T-cell (primary cell): ENCODE measurements at regions of chr1 and their contacts with region 1.

Region 1: GRCh38 chr1:21255278-21255942 is 34.9 kb downstream of the ECE1 start:
- DNase-seq: peak; percentile 51 to 90 (median 82)
- ATAC-seq: peak; percentile 73 to 81 (median 74)
- H3K4me3 ChIP-seq: no peak overlapping the region
- H3K4me3 Mint-ChIP-seq: no peak overlapping the region
- H3K27ac ChIP-seq: no peak overlapping the region
- H3K27ac Mint-ChIP-seq: peak overlapping the region in 1 of 2 donors; percentile 53
- H3K4me1 ChIP-seq: peaks cover 7 to 17% of the 10 kb centered on the region in 2 experiments
- H3K4me1 Mint-ChIP-seq: peaks cover 32 to 34% (median 33%) of the 10 kb centered on the region in 3 donors
- H3K27me3 ChIP-seq: no peaks in the 10 kb centered on the region
- H3K27me3 Mint-ChIP-seq: no peaks in the 10 kb centered on the region

Region 2: GRCh38 chr1:21270086-21270689 is 14.8 kb after region 1 on chr1:
- CTCF ChIA-PET with region 1: interaction called, 4 to 13 read pairs
- POLR2A ChIA-PET with region 1: no interaction called
- DNase-seq: peak; percentile 56 to 87 (median 78)
- ATAC-seq: peak; percentile 84 to 91 (median 89)
- H3K4me3 ChIP-seq: no peak overlapping the region
- H3K4me3 Mint-ChIP-seq: peak overlapping the region in 1 of 3 donors; percentile 19
- H3K27ac ChIP-seq: no peak overlapping the region
- H3K27ac Mint-ChIP-seq: peak overlapping the region; percentile 71 to 78
- H3K4me1 ChIP-seq: peaks cover 0 to 17% of the 10 kb centered on the region in 2 experiments
- H3K4me1 Mint-ChIP-seq: peaks cover 24 to 28% (median 28%) of the 10 kb centered on the region in 3 donors
- H3K27me3 ChIP-seq: no peaks in the 10 kb centered on the region
- H3K27me3 Mint-ChIP-seq: no peaks in the 10 kb centered on the region

Region 3: DNA sequence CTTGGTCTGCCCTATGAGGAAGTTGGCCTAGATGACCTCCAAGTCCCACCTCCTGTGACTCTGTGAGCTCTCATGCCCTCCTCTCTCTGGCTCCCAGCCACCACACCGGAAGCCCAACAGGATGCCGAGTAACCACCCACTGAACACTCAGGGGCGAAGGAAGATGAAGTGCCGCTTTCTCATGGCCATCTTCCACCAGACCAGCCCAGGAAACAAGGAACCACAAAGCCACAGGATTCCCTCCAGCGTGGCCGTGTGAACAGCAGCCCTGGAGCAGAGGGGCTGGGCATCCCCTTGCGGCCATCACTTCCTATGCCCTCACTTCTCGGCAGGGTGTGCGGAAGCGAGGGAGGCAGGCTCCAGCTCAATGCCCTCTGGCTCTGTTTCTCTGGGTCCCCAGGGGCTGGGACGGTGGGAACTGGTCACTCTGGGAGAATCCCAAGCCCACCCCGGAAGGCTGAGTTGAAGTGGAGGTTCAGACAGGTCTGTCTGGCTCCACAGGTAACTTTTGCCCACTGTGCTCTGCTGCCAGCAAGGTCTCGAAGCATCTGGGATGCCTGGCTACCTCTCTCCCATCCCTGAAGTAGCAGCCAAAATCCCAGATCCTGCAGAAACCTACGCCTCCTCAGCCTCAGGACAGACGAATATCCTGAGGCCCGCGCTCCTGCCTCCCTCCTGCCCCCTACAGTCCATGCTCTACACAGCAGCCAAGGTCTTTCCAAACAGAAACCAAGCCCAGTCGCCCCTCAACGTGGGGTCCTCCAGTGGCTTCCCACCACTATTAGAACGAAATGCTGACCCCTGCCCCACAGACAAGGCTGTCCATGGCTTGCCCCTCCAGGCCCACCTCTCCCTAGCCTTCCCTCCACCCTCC is 79.0 kb after region 1 on chr1:
- CTCF ChIA-PET with region 1: interaction called in 1 of 2 experiments, 11 read pairs
- POLR2A ChIA-PET with region 1: no interaction called
- DNase-seq: peak; percentile 61 to 89 (median 81)
- ATAC-seq: peak; percentile 86 to 94 (median 91)
- H3K4me3 ChIP-seq: peak overlapping the region; percentile 43 to 63
- H3K4me3 Mint-ChIP-seq: peak overlapping the region; percentile 80 to 91 (median 81)
- H3K27ac ChIP-seq: peak overlapping the region; percentile 94
- H3K27ac Mint-ChIP-seq: peak overlapping the region; percentile 98 to 99
- H3K4me1 ChIP-seq: peaks cover 63 to 89% of the 10 kb centered on the region in 2 experiments
- H3K4me1 Mint-ChIP-seq: peaks cover 87 to 90% (median 88%) of the 10 kb centered on the region in 3 donors
- H3K27me3 ChIP-seq: no peaks in the 10 kb centered on the region
- H3K27me3 Mint-ChIP-seq: no peaks in the 10 kb centered on the region

Region 4: DNA sequence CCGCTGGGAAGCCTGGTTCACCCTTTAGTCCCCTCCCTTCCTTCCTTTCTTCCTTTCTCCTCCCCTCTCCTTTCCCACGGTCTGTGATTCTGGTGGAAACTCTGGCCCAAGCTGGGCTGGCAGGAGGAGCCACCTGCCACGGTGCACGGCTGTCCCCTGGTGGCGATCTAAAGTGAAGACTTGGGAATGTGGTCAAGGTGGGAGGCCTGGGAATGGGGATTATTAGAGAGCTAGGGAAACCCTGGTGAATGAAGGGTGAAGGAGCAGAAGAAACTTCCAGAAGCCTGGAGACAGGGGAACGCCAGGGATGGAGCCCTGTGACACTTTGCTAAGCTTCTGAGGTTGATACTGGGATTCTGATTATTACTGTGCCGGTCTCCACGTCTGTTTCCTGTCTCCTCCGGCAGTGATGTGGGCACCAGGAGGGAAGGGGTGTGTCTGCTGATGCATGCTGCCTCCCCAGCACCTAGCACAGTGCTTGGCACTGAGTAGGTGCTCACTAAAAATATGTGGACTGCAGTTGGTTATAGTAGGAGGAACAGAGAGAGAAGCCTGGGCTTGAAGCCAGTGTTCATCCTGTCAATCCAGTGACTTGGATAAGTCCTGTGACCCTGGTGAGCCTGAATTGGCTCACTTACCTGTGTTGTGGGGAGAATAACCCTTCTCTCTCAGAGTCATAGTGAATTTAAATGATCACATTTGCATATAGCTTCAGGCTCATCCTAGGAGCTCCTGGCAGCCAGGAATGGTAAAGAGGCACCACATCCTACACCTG is 113.3 kb after region 1 on chr1:
- CTCF ChIA-PET with region 1: interaction called, 27 to 38 read pairs
- POLR2A ChIA-PET with region 1: no interaction called
- DNase-seq: peak; percentile 13 to 81 (median 51)
- ATAC-seq: peak; percentile 63 to 76 (median 69)
- H3K4me3 ChIP-seq: no peak overlapping the region
- H3K4me3 Mint-ChIP-seq: no peak overlapping the region
- H3K27ac ChIP-seq: no peak overlapping the region
- H3K27ac Mint-ChIP-seq: no peak overlapping the region
- H3K4me1 ChIP-seq: peaks cover 0 to 8% of the 10 kb centered on the region in 2 experiments
- H3K4me1 Mint-ChIP-seq: peaks cover 10 to 17% (median 12%) of the 10 kb centered on the region in 3 donors
- H3K27me3 ChIP-seq: peaks cover 0 to 2% of the 10 kb centered on the region in 2 experiments
- H3K27me3 Mint-ChIP-seq: no peaks in the 10 kb centered on the region

Region 5: GRCh38 chr1:21651214-21652042 is 396.0 kb after region 1 on chr1:
- CTCF ChIA-PET with region 1: interaction called in 1 of 2 experiments, 10 read pairs
- POLR2A ChIA-PET with region 1: no interaction called
- DNase-seq: peak in 30 of 35 experiments; percentile 11 to 63 (median 29)
- ATAC-seq: peak; percentile 72 to 87 (median 83)
- H3K4me3 ChIP-seq: peak overlapping the region; percentile 47 to 77
- H3K4me3 Mint-ChIP-seq: peak overlapping the region; percentile 81 to 87 (median 81)
- H3K27ac ChIP-seq: no peak overlapping the region
- H3K27ac Mint-ChIP-seq: peak overlapping the region in 1 of 2 donors; percentile 34
- H3K4me1 ChIP-seq: peaks cover 6 to 20% of the 10 kb centered on the region in 2 experiments
- H3K4me1 Mint-ChIP-seq: peaks cover 15 to 18% (median 15%) of the 10 kb centered on the region in 3 donors
- H3K27me3 ChIP-seq: peaks cover 2 to 54% of the 10 kb centered on the region in 2 experiments
- H3K27me3 Mint-ChIP-seq: peaks cover 11 to 16% of the 10 kb centered on the region in 2 donors